Spleen (tissue), 13 donors: ENCODE measurements at regions of chr5 and their contacts with region 1.

Region 1: GRCh38 chr5:32489791-32490582 is 45.4 kb upstream of the ZFR start:
- DNase-seq: peak; percentile 85
- H3K4me3 ChIP-seq: no peak overlapping the region
- H3K27ac ChIP-seq: no peak overlapping the region
- H3K4me1 ChIP-seq: peaks cover 0 to 9% (median 0%) of the 10 kb centered on the region in 6 donors
- H3K27me3 ChIP-seq: no peaks in the 10 kb centered on the region
- CTCF ChIP-seq: peak; percentile 19 to 78 (median 65)
- POLR2A ChIP-seq: no peak

Region 2: GRCh38 chr5:32589942-32590869 is 100.2 kb after region 1 on chr5:
- intact Hi-C with region 1: loop called (anchors 5 kb)
- DNase-seq: no peak
- H3K4me3 ChIP-seq: no peak overlapping the region
- H3K27ac ChIP-seq: no peak overlapping the region
- H3K4me1 ChIP-seq: peaks cover 23 to 93% (median 79%) of the 10 kb centered on the region in 6 donors
- H3K27me3 ChIP-seq: no peaks in the 10 kb centered on the region
- CTCF ChIP-seq: peak; percentile 62 to 86 (median 80)
- POLR2A ChIP-seq: no peak